GM10248 (cell line): ENCODE measurements at regions of chr12 and their contacts with region 1.

Region 1: GRCh38 chr12:123062681-123063486 is 82.4 kb downstream of the ARL6IP4 start:
- DNase-seq: no peak
- CTCF ChIP-seq: no peak

Region 2: DNA sequence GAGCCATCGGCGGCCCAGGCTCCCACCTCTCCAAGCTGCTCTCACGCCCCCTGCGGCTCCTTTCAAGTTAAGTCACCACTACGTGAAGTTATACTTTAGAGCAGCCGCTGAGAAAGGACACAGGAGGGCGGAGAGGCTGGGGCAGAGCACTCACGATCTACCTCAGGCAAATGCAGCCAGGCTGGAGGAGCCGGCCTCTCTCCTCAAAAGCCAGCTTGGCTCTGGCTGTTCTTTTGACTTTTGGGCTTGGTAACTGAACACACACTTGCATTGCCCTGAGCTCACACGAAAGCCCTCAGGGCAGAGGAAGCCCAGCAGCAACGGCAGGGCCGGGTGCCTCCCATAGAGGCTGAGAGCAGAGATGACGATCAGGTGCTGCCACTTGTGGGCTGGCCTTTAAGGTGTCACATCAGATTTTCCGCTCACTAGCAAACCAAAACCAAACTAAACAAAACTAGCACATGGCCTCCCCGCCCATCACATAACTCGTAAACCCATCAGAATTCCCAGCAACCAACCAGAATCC is 12.8 kb after region 1 on chr12:
- CTCF ChIA-PET with region 1: interaction called, 10 read pairs
- POLR2A ChIA-PET with region 1: no interaction called
- DNase-seq: peak; percentile 75
- CTCF ChIP-seq: no peak